Naive thymus-derived CD4-positive, alpha-beta T cell (primary cell): ENCODE measurements at regions of chr6 and their contacts with region 1.

Region 1: GRCh38 chr6:100657678-100658330 is 193.1 kb upstream of the SIM1 start:
- DNase-seq: peak in 1 of 9 donors; percentile 3
- ATAC-seq: no peak
- H3K4me3 ChIP-seq: no peak overlapping the region
- H3K4me3 Mint-ChIP-seq: no peak overlapping the region
- H3K27ac ChIP-seq: no peak overlapping the region
- H3K27ac Mint-ChIP-seq: no peak overlapping the region
- H3K4me1 ChIP-seq: no peaks in the 10 kb centered on the region
- H3K4me1 Mint-ChIP-seq: no peaks in the 10 kb centered on the region
- H3K27me3 ChIP-seq: no peaks in the 10 kb centered on the region
- H3K27me3 Mint-ChIP-seq: no peaks in the 10 kb centered on the region

Region 2: GRCh38 chr6:100455230-100456124 is 202.3 kb before region 1 on chr6:
- CTCF ChIA-PET with region 1: no interaction called
- POLR2A ChIA-PET with region 1: no interaction called
- intact Hi-C with region 1: no loop called
- DNase-seq: no peak
- ATAC-seq: no peak
- H3K4me3 ChIP-seq: no peak overlapping the region
- H3K4me3 Mint-ChIP-seq: peak overlapping the region in 2 of 10 donors; percentile 29 to 38
- H3K27ac ChIP-seq: no peak overlapping the region
- H3K27ac Mint-ChIP-seq: peak overlapping the region in 4 of 9 donors; percentile 22 to 81 (median 50)
- H3K4me1 ChIP-seq: no peaks in the 10 kb centered on the region
- H3K4me1 Mint-ChIP-seq: peaks cover 0 to 5% (median 0%) of the 10 kb centered on the region in 7 donors
- H3K27me3 ChIP-seq: peaks cover 26 to 52% of the 10 kb centered on the region in 2 donors
- H3K27me3 Mint-ChIP-seq: peaks cover 35 to 72% (median 57%) of the 10 kb centered on the region in 5 donors

Region 3: GRCh38 chr6:100472674-100473073 is 185.1 kb before region 1 on chr6:
- CTCF ChIA-PET with region 1: no interaction called
- POLR2A ChIA-PET with region 1: no interaction called
- intact Hi-C with region 1: loop called in 1 of 2 experiments (anchors 5 kb)
- DNase-seq: no peak
- ATAC-seq: no peak
- H3K4me3 ChIP-seq: no peak overlapping the region
- H3K4me3 Mint-ChIP-seq: no peak overlapping the region
- H3K27ac ChIP-seq: no peak overlapping the region
- H3K27ac Mint-ChIP-seq: no peak overlapping the region
- H3K4me1 ChIP-seq: no peaks in the 10 kb centered on the region
- H3K4me1 Mint-ChIP-seq: peaks cover 0 to 8% (median 5%) of the 10 kb centered on the region in 7 donors
- H3K27me3 ChIP-seq: peaks cover 3 to 18% of the 10 kb centered on the region in 2 donors
- H3K27me3 Mint-ChIP-seq: peaks cover 69 to 83% (median 72%) of the 10 kb centered on the region in 5 donors